Activated CD4-positive, alpha-beta memory T cell treated with anti-CD3 and anti-CD28 coated beads for 36 hours (primary cell): ENCODE measurements at regions of chrX and their contacts with region 1.

Region 1: DNA sequence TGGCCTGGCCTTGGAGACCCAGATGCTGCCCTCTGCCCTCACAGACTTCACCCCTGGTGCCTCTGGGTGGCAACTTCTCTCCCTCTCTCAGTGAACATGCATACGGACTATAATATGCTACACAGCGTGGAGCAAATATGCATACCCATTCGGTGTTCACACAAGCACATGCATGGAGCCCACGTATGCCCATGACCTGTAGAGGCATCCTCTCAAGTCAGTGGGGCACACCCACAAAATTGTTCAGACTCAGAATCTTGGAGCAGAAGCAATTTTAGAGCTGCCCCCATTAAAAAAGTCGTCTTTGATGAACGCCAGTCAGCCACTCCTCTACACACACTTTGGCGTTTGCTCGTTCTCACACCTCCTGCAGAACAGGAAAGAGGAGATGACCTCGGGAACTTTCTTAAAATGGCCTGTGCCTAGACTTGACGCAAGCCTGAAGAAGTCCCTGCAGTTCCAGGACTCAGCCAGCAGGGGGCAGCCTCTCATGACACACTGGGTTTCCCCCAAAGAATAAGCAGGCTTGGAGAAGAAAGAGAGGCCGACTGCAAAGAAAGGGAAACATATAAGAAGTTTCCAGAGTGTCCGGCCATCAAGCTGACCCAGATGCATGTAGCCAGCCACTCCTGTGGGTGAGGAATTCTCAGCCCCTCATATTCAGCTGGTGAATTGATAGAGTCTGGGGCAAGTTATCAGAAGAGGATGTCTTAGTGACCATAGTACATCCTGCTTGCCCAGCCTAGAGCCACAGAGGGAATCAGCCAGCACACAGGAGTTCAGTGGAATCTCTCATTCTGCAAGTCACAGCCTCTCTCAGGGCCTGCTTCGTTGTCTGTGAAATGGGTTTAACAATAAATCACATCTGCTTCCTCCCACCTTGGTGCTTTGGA is 17.3 kb downstream of the APLN start:
- DNase-seq: peak; percentile 83
- H3K4me3 Mint-ChIP-seq: no peak overlapping the region
- H3K27ac Mint-ChIP-seq: no peak overlapping the region
- H3K4me1 Mint-ChIP-seq: no peaks in the 10 kb centered on the region
- H3K27me3 Mint-ChIP-seq: no peaks in the 10 kb centered on the region

Region 2: DNA sequence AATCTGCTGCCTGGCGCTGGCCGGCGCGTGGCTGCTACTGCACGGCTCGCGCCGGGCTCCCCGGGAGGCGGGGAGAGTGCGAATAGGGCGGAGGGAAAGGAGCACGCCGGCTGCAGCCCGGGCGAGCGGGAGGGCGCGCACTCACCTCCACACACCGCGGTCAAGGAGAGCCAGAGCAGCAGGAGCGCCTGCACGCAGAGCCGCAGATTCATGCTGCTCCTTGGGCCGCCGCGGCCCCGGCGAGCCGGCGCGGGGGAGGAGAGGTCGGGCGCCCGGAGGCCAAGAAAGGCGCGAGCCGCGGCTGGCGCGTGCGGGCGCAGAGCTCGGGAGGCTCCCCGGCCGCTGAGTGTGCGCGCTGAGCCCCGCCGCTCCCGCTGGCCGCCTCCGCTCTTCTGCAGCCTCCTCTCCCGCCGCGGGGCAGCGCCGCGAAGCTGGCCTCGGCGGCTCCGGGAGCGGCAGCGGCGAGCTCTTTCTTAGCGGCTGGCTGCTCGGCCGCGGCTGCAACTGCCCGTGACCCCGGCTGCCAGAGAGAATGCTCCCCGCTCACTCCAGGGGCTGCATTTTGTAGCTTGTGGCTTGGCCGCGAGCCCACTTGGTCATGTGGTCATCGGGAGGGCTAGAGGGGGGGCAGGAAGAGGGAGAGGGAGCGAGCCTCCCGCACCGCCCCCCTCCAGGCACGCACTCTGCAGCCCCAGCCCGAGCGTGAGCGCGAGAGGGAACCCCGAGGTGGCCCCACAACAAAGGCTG is 17.1 kb after region 1 on chrX and contains the start of gene APLN:
- CTCF ChIA-PET with region 1: interaction called, 10 read pairs
- POLR2A ChIA-PET with region 1: no interaction called
- intact Hi-C with region 1: no loop called
- DNase-seq: peak; percentile 22
- H3K4me3 Mint-ChIP-seq: peak within 1 kb of the TSS; percentile 59
- H3K27ac Mint-ChIP-seq: no peak within 1 kb of the TSS
- H3K4me1 Mint-ChIP-seq: peaks cover 8% of the 10 kb centered on the region
- H3K27me3 Mint-ChIP-seq: peaks cover 15% of the 10 kb centered on the region
- total RNA-seq, gene APLN: 0.26 to 0.36 TPM

Region 3: GRCh38 chrX:129726307-129727111 is 89.0 kb after region 1 on chrX:
- CTCF ChIA-PET with region 1: interaction called, 70 read pairs
- POLR2A ChIA-PET with region 1: no interaction called
- intact Hi-C with region 1: loop called (anchors 1 kb)
- DNase-seq: peak; percentile 52
- H3K4me3 Mint-ChIP-seq: no peak overlapping the region
- H3K27ac Mint-ChIP-seq: no peak overlapping the region
- H3K4me1 Mint-ChIP-seq: peaks cover 31% of the 10 kb centered on the region
- H3K27me3 Mint-ChIP-seq: no peaks in the 10 kb centered on the region

Region 4: GRCh38 chrX:129754056-129755024 is 116.9 kb after region 1 on chrX:
- CTCF ChIA-PET with region 1: interaction called, 4 read pairs
- POLR2A ChIA-PET with region 1: no interaction called
- intact Hi-C with region 1: loop called (anchors 1 kb)
- DNase-seq: peak; percentile 46
- H3K4me3 Mint-ChIP-seq: no peak overlapping the region
- H3K27ac Mint-ChIP-seq: no peak overlapping the region
- H3K4me1 Mint-ChIP-seq: peaks cover 39% of the 10 kb centered on the region
- H3K27me3 Mint-ChIP-seq: no peaks in the 10 kb centered on the region

Region 5: GRCh38 chrX:129823115-129823514 is 185.7 kb after region 1 on chrX:
- CTCF ChIA-PET with region 1: interaction called, 12 read pairs
- POLR2A ChIA-PET with region 1: no interaction called
- intact Hi-C with region 1: loop called (anchors 1 kb)
- DNase-seq: peak; percentile 46
- H3K4me3 Mint-ChIP-seq: no peak overlapping the region
- H3K27ac Mint-ChIP-seq: peak overlapping the region; percentile 81
- H3K4me1 Mint-ChIP-seq: peaks cover 16% of the 10 kb centered on the region
- H3K27me3 Mint-ChIP-seq: no peaks in the 10 kb centered on the region